Activated naive CD4-positive, alpha-beta T cell treated with anti-CD3 and anti-CD28 coated beads for 36 hours (primary cell): ENCODE measurements at regions of chr2 and their contacts with region 1.

Region 1: DNA sequence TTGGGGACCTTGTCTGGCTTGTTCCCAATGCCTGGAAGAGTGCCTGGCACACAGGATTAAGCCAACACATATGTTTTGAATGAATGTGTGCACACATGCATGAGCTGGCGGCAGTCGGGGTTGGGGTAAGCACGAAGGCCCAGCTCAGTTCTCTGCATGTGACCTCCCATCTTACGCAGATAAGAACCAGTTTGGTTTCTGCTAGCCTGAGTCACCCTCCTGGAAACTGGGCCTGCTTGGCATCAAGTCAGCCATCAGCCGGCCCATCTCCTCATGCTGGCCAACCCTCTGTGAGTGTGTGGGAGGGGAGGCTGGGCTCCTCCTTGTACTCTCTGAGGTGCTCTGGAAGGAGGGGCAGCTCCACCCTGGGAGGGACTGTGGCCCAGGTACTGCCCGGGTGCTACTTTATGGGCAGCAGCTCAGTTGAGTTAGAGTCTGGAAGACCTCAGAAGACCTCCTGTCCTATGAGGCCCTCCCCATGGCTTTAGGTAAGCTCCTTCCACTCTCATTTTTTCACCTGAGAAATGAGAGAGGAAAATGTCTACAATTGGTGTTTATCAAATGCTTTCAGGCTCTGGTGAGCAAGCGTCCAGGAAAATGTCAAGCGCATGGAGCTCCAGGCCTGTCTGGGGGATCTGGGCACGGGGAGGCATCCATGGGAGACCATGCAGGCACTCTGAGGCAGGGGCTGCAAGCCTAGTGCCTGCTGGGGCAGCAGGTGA is 9.7 kb upstream of the IL1RN start:
- DNase-seq: peak; percentile 74
- H3K4me3 Mint-ChIP-seq: no peak overlapping the region
- H3K27ac Mint-ChIP-seq: no peak overlapping the region
- H3K4me1 Mint-ChIP-seq: peaks cover 14% of the 10 kb centered on the region
- H3K27me3 Mint-ChIP-seq: no peaks in the 10 kb centered on the region

Region 2: DNA sequence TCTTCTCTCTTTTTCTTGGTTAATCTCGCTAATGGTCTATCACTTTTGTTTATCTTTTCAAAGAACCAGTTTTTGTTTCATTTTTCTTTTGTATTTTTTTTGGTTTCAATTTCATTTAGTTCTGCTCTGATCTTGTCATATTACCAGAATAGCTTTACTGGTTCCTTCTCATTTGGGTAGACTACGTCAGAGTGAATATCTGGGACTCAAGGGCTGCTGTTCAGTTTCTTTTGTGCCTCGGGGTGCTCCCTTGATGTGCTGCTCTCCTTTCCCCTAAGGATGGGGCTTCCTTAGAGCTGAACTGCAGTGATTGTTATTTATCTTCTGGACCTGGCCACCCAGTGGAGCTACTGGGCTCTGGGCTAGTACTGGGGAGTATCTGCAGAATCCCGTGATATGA is 19.7 kb before region 1 on chr2:
- CTCF ChIA-PET with region 1: interaction called, 5 read pairs
- intact Hi-C with region 1: loop called (anchors 2 kb)
- DNase-seq: peak; percentile 59
- H3K4me3 Mint-ChIP-seq: peak overlapping the region; percentile 50
- H3K27ac Mint-ChIP-seq: peak overlapping the region; percentile 79
- H3K4me1 Mint-ChIP-seq: peaks cover 19% of the 10 kb centered on the region
- H3K27me3 Mint-ChIP-seq: no peaks in the 10 kb centered on the region